ENCODE measurements at regions of chr2 and their contacts with region 1.

Region 1: DNA sequence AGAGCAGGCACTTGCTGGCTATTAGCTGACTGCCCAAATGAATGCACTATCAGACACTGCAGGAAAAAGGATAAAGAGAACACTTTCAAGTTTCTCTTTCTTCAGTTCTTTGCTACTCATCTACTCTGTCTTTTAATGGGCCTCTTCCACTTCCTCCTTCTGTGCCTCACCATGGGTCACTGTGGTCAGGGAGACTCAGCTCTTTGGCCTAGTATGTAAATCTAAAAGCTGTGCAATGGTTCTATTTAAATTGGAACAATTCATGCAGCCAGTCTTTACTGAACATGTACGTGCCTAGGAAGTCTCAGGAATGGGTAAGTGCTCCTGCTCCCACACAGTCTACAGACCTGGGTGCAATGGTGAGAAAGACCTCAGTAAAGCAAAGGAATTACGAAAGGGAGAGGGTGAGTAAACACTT is 79.1 kb upstream of the DNMT3A start:
- DNase-seq: peak; percentile 93
- ATAC-seq: peak; percentile 64
- H3K4me3 ChIP-seq: peak overlapping the region; percentile 75
- H3K27ac ChIP-seq: peak overlapping the region; percentile 98
- H3K4me1 ChIP-seq: peaks cover 35% of the 10 kb centered on the region
- H3K27me3 ChIP-seq: no peaks in the 10 kb centered on the region
- CTCF ChIP-seq: no peak
- EP300 ChIP-seq: peak; percentile 82 to 95
- POLR2A ChIP-seq: peak; percentile 72
- RAD21 ChIP-seq: 0 out of 2 replicates have a peak, but pooled peaks have one; percentile 12

Region 2: DNA sequence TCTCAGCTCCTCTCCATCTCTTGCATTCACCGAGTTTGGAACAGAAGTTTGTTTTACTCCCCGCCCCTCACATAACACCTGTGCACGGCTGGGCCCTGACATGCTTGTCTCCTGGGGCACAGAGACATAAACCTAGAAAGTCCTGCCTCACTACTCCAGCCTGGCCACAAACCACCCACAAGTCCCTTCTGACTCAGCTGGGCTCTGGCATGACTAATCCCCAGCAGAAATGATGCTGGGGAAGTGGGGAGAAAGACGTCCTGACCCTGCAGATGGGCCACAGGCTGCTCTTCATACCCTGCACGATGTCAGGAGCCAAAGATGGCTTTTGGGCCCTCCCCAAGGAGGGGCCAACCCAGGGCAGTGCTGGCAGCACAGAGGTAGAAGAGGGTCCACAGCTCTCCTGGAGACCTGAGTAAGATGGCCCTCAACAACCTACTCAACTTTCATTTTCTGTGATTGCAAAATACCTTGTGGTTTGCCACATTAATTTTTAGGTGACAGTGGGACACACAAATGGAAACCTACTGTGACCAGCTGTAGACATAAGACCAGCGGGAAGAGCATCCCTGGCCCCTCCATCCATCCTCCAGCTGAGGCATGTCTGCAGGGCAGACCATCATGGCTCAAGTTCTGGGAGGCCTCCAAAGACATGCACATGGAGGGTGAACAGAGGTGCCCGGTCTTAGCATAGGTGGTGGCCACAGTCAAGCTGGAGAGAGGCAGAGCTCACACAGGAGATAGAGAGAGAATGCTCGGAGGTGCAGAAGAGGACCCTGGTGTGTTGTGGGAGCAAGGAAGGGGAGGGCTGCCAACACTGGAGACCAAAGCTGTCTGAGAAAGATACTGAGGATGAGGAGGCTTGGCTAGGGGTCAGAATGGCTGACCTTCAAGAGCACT is 119.1 kb before region 1 on chr2:
- CTCF ChIA-PET with region 1: no interaction called
- POLR2A ChIA-PET with region 1: no interaction called
- RAD21 ChIA-PET with region 1: interaction called, 4 read pairs
- SMC1A ChIA-PET with region 1: interaction called, 12 read pairs
- in situ Hi-C with region 1: loop called (anchors 5 kb)
- intact Hi-C with region 1: loop called (anchors 2 kb)
- DNase-seq: peak; percentile 95
- ATAC-seq: peak; percentile 95
- H3K4me3 ChIP-seq: peak overlapping the region; percentile 43
- H3K27ac ChIP-seq: peak overlapping the region; percentile 54
- H3K4me1 ChIP-seq: peaks cover 36% of the 10 kb centered on the region
- H3K27me3 ChIP-seq: no peaks in the 10 kb centered on the region
- CTCF ChIP-seq: no peak
- EP300 ChIP-seq: peak; percentile 89 to 92
- POLR2A ChIP-seq: peak; percentile 46; the same call in 1 of the 2 replicates
- RAD21 ChIP-seq: no peak

Region 3: DNA sequence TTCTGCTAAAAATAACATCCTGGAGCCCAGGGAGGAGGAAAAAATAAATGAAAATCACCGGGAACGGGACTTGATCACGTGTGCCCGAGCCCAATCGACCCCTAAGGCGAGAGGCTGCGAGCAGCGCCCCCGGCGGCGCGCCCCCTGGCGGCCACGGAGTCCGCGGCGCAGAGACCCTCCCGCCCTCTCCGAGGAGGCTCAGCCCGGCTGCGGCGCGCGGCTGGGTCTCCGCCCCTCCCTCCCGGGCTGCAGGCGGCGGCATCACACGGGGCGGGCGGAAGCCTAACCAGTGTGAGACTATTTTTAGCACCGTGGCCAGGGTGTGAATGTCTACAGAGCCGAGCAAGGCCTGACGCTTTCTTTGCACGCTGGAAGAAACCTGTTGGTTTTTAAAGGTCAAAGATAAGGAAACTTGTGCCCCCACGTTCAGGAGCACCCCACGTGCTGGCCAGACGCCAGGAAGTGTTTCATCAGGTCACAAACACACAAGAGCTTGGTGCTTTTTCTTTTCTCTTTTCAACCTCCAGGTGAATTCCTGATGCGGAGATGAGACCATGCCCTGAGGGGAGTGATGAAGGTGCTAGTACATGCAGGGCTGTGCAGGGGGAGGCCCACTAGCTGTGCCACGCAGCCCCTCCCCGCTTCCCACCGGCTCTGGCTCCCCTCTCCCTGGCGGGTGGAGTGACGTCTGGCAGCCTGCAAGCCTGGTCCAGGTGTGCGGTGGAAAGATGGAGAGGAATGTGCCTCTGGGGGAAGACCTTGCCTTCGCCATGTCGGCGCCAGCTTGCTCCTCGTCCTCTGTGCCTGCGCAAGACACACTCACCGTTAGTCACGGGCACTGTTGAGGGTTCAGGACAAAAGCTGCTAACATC is 43.8 kb before region 1 on chr2:
- CTCF ChIA-PET with region 1: interaction called, 38 read pairs
- POLR2A ChIA-PET with region 1: interaction called, 73 read pairs
- RAD21 ChIA-PET with region 1: interaction called, 78 read pairs
- SMC1A ChIA-PET with region 1: interaction called, 83 read pairs
- in situ Hi-C with region 1: no loop called
- intact Hi-C with region 1: loop called (anchors 1 kb)
- DNase-seq: peak; percentile 91
- ATAC-seq: peak; percentile 97
- H3K4me3 ChIP-seq: no peak overlapping the region
- H3K27ac ChIP-seq: peak overlapping the region; percentile 80
- H3K4me1 ChIP-seq: peaks cover 39% of the 10 kb centered on the region
- H3K27me3 ChIP-seq: no peaks in the 10 kb centered on the region
- CTCF ChIP-seq: peak; percentile 75 to 96 (median 92); a peak in 5 of 6 replicates
- EP300 ChIP-seq: peak; percentile 86 to 94
- POLR2A ChIP-seq: peak; percentile 58; the same call in 1 of the 2 replicates
- RAD21 ChIP-seq: peak; percentile 76

Region 4: GRCh38 chr2:25445464-25445863 is 24.6 kb after region 1 on chr2:
- CTCF ChIA-PET with region 1: interaction called, 3 read pairs
- POLR2A ChIA-PET with region 1: interaction called, 4 read pairs
- RAD21 ChIA-PET with region 1: interaction called, 15 read pairs
- SMC1A ChIA-PET with region 1: interaction called, 13 read pairs
- in situ Hi-C with region 1: no loop called
- intact Hi-C with region 1: no loop called
- DNase-seq: no peak
- ATAC-seq: no peak
- H3K4me3 ChIP-seq: no peak overlapping the region
- H3K27ac ChIP-seq: no peak overlapping the region
- H3K4me1 ChIP-seq: peaks cover 8% of the 10 kb centered on the region
- H3K27me3 ChIP-seq: no peaks in the 10 kb centered on the region
- CTCF ChIP-seq: no peak
- EP300 ChIP-seq: no peak
- POLR2A ChIP-seq: no peak
- RAD21 ChIP-seq: no peak

Region 5: DNA sequence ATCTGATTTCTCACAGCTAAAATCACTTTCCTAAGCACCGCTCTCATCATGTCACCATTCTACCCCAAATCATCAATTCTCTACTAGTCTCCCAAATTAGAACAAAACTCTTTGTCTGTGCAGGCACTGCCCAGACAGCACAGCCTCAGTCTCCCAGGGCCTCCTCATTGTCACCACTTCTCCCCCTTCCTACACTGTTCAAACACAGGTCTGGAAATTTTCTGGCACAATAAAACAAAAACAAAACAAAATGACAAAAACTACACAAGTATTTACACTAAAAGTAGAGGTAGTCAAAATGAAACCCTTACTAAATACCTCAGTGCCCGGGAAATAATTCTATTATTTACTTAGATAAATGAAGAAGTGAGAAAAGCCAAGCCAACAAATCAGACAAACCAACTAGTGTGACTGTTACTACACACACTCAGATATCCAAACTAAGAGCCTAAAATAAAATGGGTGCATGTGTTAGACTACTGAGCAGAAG is 77.1 kb after region 1 on chr2:
- CTCF ChIA-PET with region 1: interaction called, 4 read pairs
- POLR2A ChIA-PET with region 1: interaction called, 4 read pairs
- RAD21 ChIA-PET with region 1: interaction called, 14 read pairs
- SMC1A ChIA-PET with region 1: interaction called, 23 read pairs
- in situ Hi-C with region 1: no loop called
- intact Hi-C with region 1: loop called (anchors 5 kb)
- DNase-seq: no peak
- ATAC-seq: peak; percentile 92
- H3K4me3 ChIP-seq: no peak overlapping the region
- H3K27ac ChIP-seq: peak overlapping the region; percentile 65
- H3K4me1 ChIP-seq: peaks cover 15% of the 10 kb centered on the region
- H3K27me3 ChIP-seq: no peaks in the 10 kb centered on the region
- CTCF ChIP-seq: no peak
- EP300 ChIP-seq: peak; percentile 35 to 60; a peak in 2 of 4 replicates
- POLR2A ChIP-seq: no peak
- RAD21 ChIP-seq: no peak